ENCODE measurements at regions of chr2 and their contacts with region 1.

Region 1: GRCh38 chr2:241161646-241162281 is 11.5 kb downstream of the PPP1R7 start:
- DNase-seq: peak; percentile 95 to 99
- ATAC-seq: peak; percentile 93 to 94
- H3K4me3 ChIP-seq: no peak overlapping the region
- H3K27ac ChIP-seq: peak overlapping the region; percentile 82 to 92 (median 91)
- H3K4me1 ChIP-seq: peaks cover 21 to 22% of the 10 kb centered on the region in 2 donors
- H3K27me3 ChIP-seq: no peaks in the 10 kb centered on the region
- CTCF ChIP-seq: peak in 1 of 5 experiments; percentile 35
- POLR2A ChIP-seq: peak in 1 of 2 donors; percentile 23

Region 2: DNA sequence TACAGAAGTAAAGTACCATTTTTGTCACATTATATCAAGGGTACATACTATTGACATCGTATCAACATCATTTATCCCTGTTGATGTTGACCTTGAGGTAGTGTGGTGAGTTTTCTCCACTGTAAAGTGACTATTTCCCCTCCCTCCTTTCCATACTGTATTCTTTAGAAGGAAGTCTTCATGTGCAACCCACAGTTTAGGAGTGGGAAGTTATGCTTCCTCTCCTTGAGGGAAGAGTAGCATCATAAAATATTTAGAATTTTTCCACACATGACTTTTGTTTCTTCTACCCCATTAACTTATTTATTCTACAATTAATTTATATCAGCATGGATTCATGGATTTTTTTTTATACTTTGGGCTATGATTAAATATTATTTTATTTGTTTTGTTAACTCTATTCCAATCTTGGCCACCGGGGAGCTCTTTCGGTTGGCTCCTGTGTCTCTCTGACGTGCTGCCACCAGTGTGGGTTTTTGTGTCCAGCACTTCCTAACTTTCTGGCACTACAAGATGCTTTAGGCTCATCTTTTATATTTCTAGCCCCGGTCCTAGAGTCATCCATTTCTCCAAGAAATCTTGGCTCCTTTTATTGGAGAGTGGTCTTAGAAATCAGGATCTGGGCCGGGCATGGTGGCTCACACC is 498.1 kb before region 1 on chr2:
- in situ Hi-C with region 1: no loop called
- intact Hi-C with region 1: no loop called
- DNase-seq: no peak
- ATAC-seq: no peak
- H3K4me3 ChIP-seq: no peak overlapping the region
- H3K27ac ChIP-seq: no peak overlapping the region
- H3K4me1 ChIP-seq: no peaks in the 10 kb centered on the region
- H3K27me3 ChIP-seq: peaks cover 0 to 22% (median 3%) of the 10 kb centered on the region in 3 donors
- CTCF ChIP-seq: no peak
- POLR2A ChIP-seq: no peak

Region 3: DNA sequence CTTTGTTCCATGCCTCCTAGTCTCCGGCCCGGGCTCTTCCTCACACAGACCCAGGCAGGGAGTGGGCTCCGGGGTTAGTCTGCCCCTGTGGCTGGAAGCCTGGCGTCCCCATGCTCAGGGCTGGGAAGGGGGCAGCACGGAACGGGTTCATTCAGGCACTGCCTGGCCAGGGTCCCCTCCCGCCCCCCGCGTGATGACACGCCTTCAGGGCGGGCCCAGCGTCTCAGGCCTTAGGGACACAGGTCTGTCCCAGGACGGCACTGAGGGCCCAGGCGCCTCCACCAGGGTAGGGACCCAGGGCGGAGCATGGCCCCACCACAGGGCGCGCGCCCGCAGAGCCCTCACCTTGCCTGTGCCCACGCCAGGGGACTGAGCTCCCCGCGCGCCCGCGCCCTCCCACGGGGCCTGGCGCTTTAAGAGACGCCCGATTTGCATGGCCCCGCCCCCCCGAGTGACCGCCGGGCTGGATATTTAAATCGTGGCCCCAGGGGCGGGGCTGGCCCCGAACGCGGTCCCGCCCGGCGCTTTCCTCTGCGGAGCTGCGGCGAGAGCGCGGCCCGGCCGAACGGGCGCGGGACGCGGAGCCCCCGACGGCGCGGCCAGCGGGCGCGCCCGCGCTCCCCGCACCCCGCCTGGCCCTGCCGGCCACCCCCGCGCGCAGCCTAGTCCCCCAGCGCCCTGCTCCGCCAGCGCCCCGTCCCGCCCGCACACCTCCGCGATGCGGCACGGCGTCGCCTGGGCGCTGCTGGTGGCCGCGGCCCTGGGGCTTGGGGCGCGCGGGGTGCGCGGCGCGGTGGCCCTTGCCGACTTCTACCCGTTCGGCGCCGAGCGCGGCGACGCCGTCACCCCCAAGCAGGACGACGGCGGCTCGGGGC is 163.4 kb before region 1 on chr2 and contains the start of gene SNED1:
- in situ Hi-C with region 1: no loop called
- intact Hi-C with region 1: loop called (anchors 2 kb)
- DNase-seq: peak; percentile 87 to 89
- ATAC-seq: peak; percentile 61 to 79
- H3K4me3 ChIP-seq: peak within 1 kb of the TSS; percentile 63 to 98 (median 73)
- H3K27ac ChIP-seq: peak within 1 kb of the TSS; percentile 95 to 99 (median 96)
- H3K4me1 ChIP-seq: peaks cover 41 to 51% of the 10 kb centered on the region in 2 donors
- H3K27me3 ChIP-seq: no peaks in the 10 kb centered on the region
- CTCF ChIP-seq: no peak
- POLR2A ChIP-seq: peak; percentile 92 to 98
- total RNA-seq, gene SNED1: 16.4 to 56.2 (median 43.5) TPM

Region 4: DNA sequence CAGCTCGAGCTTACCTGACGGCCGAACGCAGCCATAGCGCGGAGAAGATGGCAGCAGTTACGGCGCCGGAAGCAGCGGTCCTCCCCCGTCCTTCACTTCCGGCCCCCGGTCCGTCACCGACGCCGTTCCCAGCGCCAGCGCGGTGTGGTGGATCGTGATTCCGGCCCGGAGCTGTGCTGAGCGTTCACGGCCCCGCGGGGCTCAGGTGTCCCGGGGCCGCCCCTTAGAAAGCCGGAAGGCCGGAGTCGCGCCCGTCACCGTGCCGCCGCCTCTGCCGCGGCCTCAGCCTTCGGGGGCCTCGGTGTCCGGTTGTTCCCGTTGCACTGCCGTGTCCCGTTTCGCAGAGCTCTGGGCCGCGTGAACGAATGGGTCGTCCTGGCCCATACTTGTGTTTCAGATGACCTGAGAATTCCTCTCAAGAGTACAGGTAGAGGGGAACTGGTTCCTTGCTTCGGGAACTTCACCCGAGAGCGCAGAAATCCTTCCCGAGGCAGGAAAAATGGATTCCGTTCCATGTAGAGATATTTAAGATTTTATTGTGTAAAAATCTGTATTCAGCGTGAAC is 59.4 kb before region 1 on chr2 and contains the start of gene MTERF4:
- in situ Hi-C with region 1: no loop called
- intact Hi-C with region 1: loop called (anchors 1 kb)
- DNase-seq: peak; percentile 76 to 88
- ATAC-seq: peak; percentile 88 to 94
- H3K4me3 ChIP-seq: peak within 1 kb of the TSS; percentile 89 to 99 (median 94)
- H3K27ac ChIP-seq: peak within 1 kb of the TSS; percentile 85 to 90 (median 88)
- H3K4me1 ChIP-seq: peaks cover 27 to 28% of the 10 kb centered on the region in 2 donors
- H3K27me3 ChIP-seq: no peaks in the 10 kb centered on the region
- CTCF ChIP-seq: no peak
- POLR2A ChIP-seq: peak; percentile 71 to 73
- total RNA-seq, gene MTERF4: 21.8 to 49.3 (median 37.0) TPM

Region 5: GRCh38 chr2:241149925-241150659 is 11.7 kb before region 1 on chr2 and contains the start of gene PPP1R7:
- in situ Hi-C with region 1: no loop called
- intact Hi-C with region 1: loop called (anchors 1 kb)
- DNase-seq: peak; percentile 90 to 93
- ATAC-seq: peak; percentile 87 to 91
- H3K4me3 ChIP-seq: peak within 1 kb of the TSS; percentile 72 to 99 (median 83)
- H3K27ac ChIP-seq: peak within 1 kb of the TSS; percentile 78 to 93 (median 84)
- H3K4me1 ChIP-seq: peaks cover 13 to 15% of the 10 kb centered on the region in 2 donors
- H3K27me3 ChIP-seq: no peaks in the 10 kb centered on the region
- CTCF ChIP-seq: no peak
- POLR2A ChIP-seq: peak; percentile 78 to 82
- total RNA-seq, gene PPP1R7: 58.6 to 87.8 (median 67.2) TPM

Region 6: GRCh38 chr2:241271641-241272297 is 110.0 kb after region 1 on chr2:
- in situ Hi-C with region 1: no loop called
- intact Hi-C with region 1: loop called (anchors 5 kb)
- DNase-seq: peak; percentile 80 to 81
- ATAC-seq: peak; percentile 88 to 90
- H3K4me3 ChIP-seq: peak overlapping the region; percentile 67 to 93 (median 73)
- H3K27ac ChIP-seq: peak overlapping the region; percentile 83 to 97 (median 92)
- H3K4me1 ChIP-seq: peaks cover 42 to 43% of the 10 kb centered on the region in 2 donors
- H3K27me3 ChIP-seq: no peaks in the 10 kb centered on the region
- CTCF ChIP-seq: no peak
- POLR2A ChIP-seq: peak in 1 of 2 donors; percentile 46

Region 7: DNA sequence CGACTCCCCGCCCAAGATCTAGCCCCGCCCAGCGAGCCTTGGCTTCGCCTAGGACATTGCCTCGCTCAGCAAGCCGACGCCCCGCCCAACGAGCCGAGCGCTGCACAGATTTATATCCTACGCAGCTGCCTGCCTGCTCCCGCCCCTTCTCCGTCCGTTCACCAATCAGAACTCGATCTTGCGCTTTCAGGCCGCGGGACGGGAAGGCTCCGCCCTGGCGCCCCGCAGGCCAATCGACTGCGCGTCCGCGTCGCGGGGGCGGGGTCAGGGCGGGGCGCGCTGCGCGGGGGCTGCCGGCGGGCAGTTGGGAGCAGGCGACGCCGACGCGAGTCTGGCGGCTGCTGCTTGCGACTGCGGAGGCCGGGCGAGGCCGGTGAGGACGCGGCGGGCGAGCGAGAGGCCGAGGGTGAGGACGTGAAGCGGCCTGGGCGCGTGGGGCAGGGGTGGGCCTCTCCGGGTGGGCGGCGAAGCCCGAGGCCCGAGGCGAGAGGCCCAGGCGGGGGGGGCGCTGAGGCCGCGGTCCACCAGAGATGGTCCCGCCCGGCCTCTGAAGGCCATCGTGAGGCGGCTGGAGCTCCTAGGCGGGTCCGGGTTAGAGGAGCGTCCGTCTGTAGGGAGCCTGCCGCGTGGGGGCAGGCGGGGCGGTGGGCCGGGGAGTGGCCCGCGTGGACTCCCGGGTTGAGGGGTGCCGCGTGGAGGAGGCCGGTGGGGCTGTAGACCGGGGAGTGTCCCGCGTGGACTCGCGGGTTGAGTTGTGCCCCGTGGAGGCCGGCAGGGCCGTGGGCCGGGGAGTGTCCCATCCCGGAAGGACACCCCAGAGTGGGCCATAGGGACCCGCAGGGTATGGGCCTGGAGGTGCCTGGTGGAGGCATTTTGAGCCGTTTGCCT is 194.5 kb after region 1 on chr2 and contains the start of gene FARP2:
- in situ Hi-C with region 1: no loop called
- intact Hi-C with region 1: loop called (anchors 5 kb)
- DNase-seq: peak; percentile 99
- ATAC-seq: peak; percentile 92 to 96
- H3K4me3 ChIP-seq: peak within 1 kb of the TSS; percentile 70 to 85 (median 82)
- H3K27ac ChIP-seq: peak within 1 kb of the TSS; percentile 80 to 95 (median 92)
- H3K4me1 ChIP-seq: peaks cover 23 to 30% of the 10 kb centered on the region in 2 donors
- H3K27me3 ChIP-seq: no peaks in the 10 kb centered on the region
- CTCF ChIP-seq: no peak
- POLR2A ChIP-seq: peak; percentile 87 to 88
- total RNA-seq, gene FARP2: 10.7 to 20.1 (median 13.6) TPM

Region 8: DNA sequence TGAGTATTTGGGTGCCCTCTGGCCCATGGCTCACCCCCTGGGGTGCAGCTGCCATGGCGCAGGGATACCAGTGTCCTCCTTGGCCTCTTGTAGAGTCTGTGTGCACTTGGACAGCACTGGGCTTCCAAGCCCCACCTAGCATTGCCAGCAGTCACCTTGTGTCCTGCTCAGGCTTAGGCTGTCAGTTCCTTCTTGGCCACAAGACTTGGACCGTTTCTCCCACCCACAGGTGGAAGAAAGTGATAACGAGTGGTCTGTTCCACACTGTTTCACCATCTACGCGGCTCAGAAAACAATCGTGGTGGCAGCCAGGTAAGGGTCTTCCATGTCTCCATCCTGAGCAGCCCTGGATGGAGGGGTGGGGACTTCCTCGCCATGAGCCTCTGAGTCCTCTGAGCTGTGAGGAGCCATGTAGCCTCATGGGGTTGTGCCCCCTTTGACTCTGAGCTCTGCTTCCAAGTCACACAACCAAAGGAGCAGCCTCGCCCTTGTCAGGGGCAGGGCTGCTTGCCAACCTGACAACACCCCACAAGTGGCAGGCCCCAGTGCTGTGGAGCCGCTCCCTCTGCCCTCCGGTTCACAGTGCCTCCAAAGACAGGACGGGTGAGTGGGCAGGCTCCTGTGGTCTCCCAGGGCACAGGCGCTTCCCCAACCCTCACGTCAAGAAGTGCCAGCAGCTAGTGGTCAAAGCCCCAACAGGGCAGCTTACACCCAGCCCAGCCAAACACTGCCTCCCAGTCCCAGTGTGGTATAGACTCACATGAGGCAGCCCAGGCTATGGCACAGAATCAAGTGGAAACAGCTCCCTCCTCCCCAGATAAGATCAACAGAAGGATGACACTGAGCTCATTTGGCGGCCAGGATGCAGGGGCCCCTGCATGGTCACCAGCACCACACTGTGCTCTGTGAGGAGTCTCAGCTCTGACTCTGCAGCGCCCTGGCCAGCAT is 328.2 kb after region 1 on chr2:
- in situ Hi-C with region 1: no loop called
- intact Hi-C with region 1: no loop called
- DNase-seq: no peak
- ATAC-seq: no peak
- H3K4me3 ChIP-seq: no peak overlapping the region
- H3K27ac ChIP-seq: no peak overlapping the region
- H3K4me1 ChIP-seq: no peaks in the 10 kb centered on the region
- H3K27me3 ChIP-seq: no peaks in the 10 kb centered on the region
- CTCF ChIP-seq: no peak
- POLR2A ChIP-seq: no peak